ENCODE measurements at regions of chr2 and their contacts with region 1.

Region 1: GRCh38 chr2:231463698-231464575 is at the start of gene NCL:
- DNase-seq: peak; percentile 75 to 98 (median 81)
- ATAC-seq: peak; percentile 67
- H3K4me3 ChIP-seq: peak within 1 kb of the TSS; percentile 91
- H3K4me3 Mint-ChIP-seq: peak within 1 kb of the TSS; percentile 93
- H3K27ac ChIP-seq: peak within 1 kb of the TSS; percentile 96 to 97
- H3K27ac Mint-ChIP-seq: peak within 1 kb of the TSS; percentile 99
- H3K4me1 ChIP-seq: peaks cover 57% of the 10 kb centered on the region
- H3K4me1 Mint-ChIP-seq: peaks cover 57% of the 10 kb centered on the region
- H3K27me3 ChIP-seq: no peaks in the 10 kb centered on the region
- H3K27me3 Mint-ChIP-seq: no peaks in the 10 kb centered on the region
- CTCF ChIP-seq: no peak
- total RNA-seq, gene NCL: 387 to 395 TPM

Region 2: GRCh38 chr2:231124838-231125568 is 338.9 kb before region 1 on chr2 and contains the start of gene HTR2B:
- CTCF ChIA-PET with region 1: no interaction called
- POLR2A ChIA-PET with region 1: interaction called, 13 read pairs
- intact Hi-C with region 1: no loop called
- DNase-seq: peak in 1 of 14 experiments; percentile 22
- ATAC-seq: peak; percentile 79
- H3K4me3 ChIP-seq: no peak within 1 kb of the TSS
- H3K4me3 Mint-ChIP-seq: peak within 1 kb of the TSS; percentile 81
- H3K27ac ChIP-seq: no peak within 1 kb of the TSS
- H3K27ac Mint-ChIP-seq: peak within 1 kb of the TSS; percentile 81
- H3K4me1 ChIP-seq: no peaks in the 10 kb centered on the region
- H3K4me1 Mint-ChIP-seq: peaks cover 59% of the 10 kb centered on the region
- H3K27me3 ChIP-seq: no peaks in the 10 kb centered on the region
- H3K27me3 Mint-ChIP-seq: no peaks in the 10 kb centered on the region
- CTCF ChIP-seq: no peak
- total RNA-seq, gene HTR2B: 0.14 TPM in 1 of 2 experiments, not detected in the other

Region 3: GRCh38 chr2:231475965-231476364 is 12.0 kb after region 1 on chr2:
- CTCF ChIA-PET with region 1: no interaction called
- POLR2A ChIA-PET with region 1: interaction called, 174 read pairs
- intact Hi-C with region 1: no loop called
- DNase-seq: no peak
- ATAC-seq: no peak
- H3K4me3 ChIP-seq: no peak overlapping the region
- H3K4me3 Mint-ChIP-seq: no peak overlapping the region
- H3K27ac ChIP-seq: no peak overlapping the region
- H3K27ac Mint-ChIP-seq: no peak overlapping the region
- H3K4me1 ChIP-seq: no peaks in the 10 kb centered on the region
- H3K4me1 Mint-ChIP-seq: no peaks in the 10 kb centered on the region
- H3K27me3 ChIP-seq: no peaks in the 10 kb centered on the region
- H3K27me3 Mint-ChIP-seq: no peaks in the 10 kb centered on the region
- CTCF ChIP-seq: no peak

Region 4: DNA sequence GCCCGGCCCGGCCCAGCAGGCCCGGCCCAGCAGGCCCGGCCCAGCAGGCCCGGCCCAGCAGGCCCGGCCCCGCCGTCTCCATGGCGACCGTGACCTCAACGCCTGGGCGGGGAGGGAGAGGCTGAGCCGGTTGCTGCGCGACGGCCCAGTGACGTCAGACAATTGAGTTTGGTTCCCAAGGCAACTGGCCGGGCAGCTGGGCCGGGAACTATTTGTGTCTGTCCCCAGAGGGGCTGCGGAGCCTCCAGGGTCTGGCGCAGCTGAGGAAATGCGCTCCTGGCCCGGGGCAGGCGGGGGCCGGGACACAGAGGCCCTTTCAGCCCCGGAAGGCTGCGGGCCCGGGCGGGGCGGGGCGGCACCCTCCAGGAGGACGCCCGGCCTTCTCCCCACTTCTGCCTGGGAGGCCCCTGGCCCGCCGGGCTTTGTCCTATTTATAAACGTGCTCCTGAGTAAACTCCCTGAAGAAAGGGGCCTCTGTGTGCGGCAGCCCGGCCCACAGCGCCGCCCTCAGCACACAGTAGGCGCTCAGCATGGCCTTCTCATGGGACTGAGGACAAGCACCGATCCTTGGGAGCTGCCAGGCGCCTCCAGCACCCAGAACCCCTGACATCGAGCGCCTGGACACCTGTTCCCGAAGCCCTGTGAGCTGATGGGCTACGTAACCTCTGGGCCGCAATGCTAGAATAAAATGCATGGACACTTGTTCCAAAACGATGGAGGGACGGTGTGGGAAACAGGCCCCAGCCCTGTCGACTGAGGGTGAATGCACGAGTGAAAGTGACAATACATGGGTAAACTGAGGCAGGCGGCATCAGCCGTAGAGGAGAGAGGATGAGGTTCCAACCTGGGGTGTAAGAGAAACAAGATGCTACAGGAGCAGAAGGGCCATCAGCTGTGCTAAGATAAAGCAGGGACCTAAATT is 141.0 kb after region 1 on chr2:
- CTCF ChIA-PET with region 1: interaction called, 5 read pairs
- POLR2A ChIA-PET with region 1: interaction called, 8 read pairs
- intact Hi-C with region 1: loop called in 1 of 2 experiments (anchors 5 kb)
- DNase-seq: peak; percentile 86 to 99 (median 95)
- ATAC-seq: peak; percentile 79
- H3K4me3 ChIP-seq: peak overlapping the region; percentile 41
- H3K4me3 Mint-ChIP-seq: peak overlapping the region; percentile 65
- H3K27ac ChIP-seq: peak overlapping the region in 1 of 2 donors; percentile 45
- H3K27ac Mint-ChIP-seq: peak overlapping the region; percentile 74
- H3K4me1 ChIP-seq: peaks cover 23% of the 10 kb centered on the region
- H3K4me1 Mint-ChIP-seq: peaks cover 12% of the 10 kb centered on the region
- H3K27me3 ChIP-seq: no peaks in the 10 kb centered on the region
- H3K27me3 Mint-ChIP-seq: no peaks in the 10 kb centered on the region
- CTCF ChIP-seq: no peak

Region 5: DNA sequence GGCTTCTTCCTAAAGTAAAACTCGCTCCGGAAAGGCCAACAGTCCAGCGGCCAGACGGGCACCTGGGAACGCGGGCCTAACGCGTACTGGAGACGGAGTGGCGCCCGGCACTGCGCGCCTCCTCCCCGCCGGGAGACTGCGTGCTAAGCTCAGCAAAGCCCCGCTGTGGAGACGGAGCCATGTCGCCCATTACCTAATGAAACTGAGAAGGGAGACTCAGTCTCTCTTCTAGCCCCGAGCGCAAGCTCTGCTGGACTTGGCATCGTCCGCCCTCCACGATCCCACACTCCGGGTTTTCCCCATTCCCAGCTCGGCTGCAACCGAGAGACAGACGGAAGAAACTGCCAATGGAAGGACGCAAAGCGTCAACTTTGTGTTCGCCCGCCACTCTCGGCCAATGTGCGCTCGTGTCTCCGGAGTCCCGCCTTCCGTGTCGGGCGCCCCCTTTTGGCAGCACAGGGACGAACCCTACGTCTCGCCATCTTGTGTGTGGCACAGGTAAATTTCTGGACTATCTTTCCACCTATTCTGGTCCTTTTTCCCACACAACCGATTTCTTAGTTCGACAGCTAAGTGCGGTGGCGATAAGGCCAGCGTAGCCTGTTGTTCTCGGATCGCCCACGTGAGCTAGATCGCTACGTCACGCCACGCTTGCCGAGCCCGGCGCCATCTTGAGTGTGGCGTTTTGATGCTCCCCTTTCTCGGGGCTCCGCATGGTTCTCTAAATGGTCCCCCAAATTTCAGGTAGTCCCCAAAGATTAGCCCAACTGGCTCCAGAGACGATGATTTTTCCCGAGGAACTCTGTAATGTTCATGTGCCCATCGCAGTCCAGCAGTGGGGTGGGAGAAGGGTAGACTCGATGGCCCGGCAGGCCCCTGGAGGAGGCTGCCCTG is 243.0 kb after region 1 on chr2:
- CTCF ChIA-PET with region 1: interaction called, 6 read pairs
- POLR2A ChIA-PET with region 1: interaction called, 97 read pairs
- intact Hi-C with region 1: loop called in 1 of 2 experiments (anchors 5 kb)
- DNase-seq: peak; percentile 95 to 99 (median 98)
- ATAC-seq: peak; percentile 53
- H3K4me3 ChIP-seq: peak overlapping the region; percentile 82
- H3K4me3 Mint-ChIP-seq: peak overlapping the region; percentile 98
- H3K27ac ChIP-seq: peak overlapping the region; percentile 98 to 100
- H3K27ac Mint-ChIP-seq: peak overlapping the region; percentile 100
- H3K4me1 ChIP-seq: peaks cover 40% of the 10 kb centered on the region
- H3K4me1 Mint-ChIP-seq: peaks cover 41% of the 10 kb centered on the region
- H3K27me3 ChIP-seq: no peaks in the 10 kb centered on the region
- H3K27me3 Mint-ChIP-seq: peaks cover 9% of the 10 kb centered on the region
- CTCF ChIP-seq: peak; percentile 96

Region 6: DNA sequence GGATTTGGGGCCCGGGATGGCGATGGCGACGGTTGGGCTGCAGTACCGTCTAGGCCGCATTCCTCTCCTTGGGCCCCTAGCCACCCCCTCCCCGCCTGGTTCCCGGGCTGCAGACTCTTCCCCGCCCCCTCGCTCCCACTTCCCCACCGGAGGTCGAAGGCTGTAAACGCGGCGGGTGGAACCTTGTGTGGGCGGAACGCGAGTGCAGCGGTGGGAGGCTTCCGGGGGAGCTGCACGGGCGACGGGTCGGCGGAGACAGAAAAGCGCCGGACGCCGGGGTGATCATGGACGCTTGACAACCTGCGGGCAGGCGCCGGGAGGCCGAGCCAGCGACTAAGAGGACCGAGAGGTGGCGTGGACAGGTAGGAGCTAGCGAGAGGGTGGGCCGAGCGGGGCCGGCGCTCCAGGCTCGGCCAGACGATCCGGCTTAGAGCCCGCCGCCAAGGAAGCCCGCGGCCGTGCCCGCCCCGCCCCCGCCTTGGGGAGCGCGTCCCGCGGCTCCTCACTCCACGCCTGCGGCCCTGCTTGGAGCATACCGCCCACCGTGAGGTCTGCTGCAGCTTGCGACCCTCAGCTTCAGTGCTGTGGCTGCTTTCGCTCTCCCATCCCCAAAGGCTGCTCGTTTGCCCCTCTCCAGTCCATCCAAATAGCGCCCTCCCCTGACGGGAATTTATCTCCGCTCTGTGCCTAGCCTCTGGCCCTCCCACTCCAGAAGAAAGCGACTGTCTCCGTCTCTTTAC is 322.4 kb after region 1 on chr2 and contains the start of gene COPS7B:
- CTCF ChIA-PET with region 1: interaction called, 3 read pairs
- POLR2A ChIA-PET with region 1: interaction called, 10 read pairs
- intact Hi-C with region 1: loop called in 1 of 2 experiments (anchors 5 kb)
- DNase-seq: peak; percentile 65 to 90 (median 74)
- ATAC-seq: peak; percentile 63
- H3K4me3 ChIP-seq: peak within 1 kb of the TSS; percentile 73
- H3K4me3 Mint-ChIP-seq: peak within 1 kb of the TSS; percentile 90
- H3K27ac ChIP-seq: peak within 1 kb of the TSS; percentile 52 to 55
- H3K27ac Mint-ChIP-seq: peak within 1 kb of the TSS; percentile 82
- H3K4me1 ChIP-seq: peaks cover 40% of the 10 kb centered on the region
- H3K4me1 Mint-ChIP-seq: peaks cover 73% of the 10 kb centered on the region
- H3K27me3 ChIP-seq: no peaks in the 10 kb centered on the region
- H3K27me3 Mint-ChIP-seq: no peaks in the 10 kb centered on the region
- CTCF ChIP-seq: peak; percentile 38
- total RNA-seq, gene COPS7B: 27.6 to 29.9 TPM